T-cell (primary cell): ENCODE measurements at regions of chr20 and their contacts with region 1.

Region 1: GRCh38 chr20:57398231-57398821 is 7.1 kb downstream of the RBM38 start:
- DNase-seq: peak; percentile 88 to 98 (median 96)
- ATAC-seq: peak; percentile 79 to 83 (median 80)
- H3K4me3 ChIP-seq: peak overlapping the region; percentile 49 to 60
- H3K4me3 Mint-ChIP-seq: peak overlapping the region; percentile 83 to 94 (median 84)
- H3K27ac ChIP-seq: peak overlapping the region; percentile 98
- H3K27ac Mint-ChIP-seq: peak overlapping the region; percentile 97 to 100
- H3K4me1 ChIP-seq: peaks cover 70 to 100% of the 10 kb centered on the region in 2 experiments
- H3K4me1 Mint-ChIP-seq: peaks cover 82 to 96% (median 94%) of the 10 kb centered on the region in 3 donors
- H3K27me3 ChIP-seq: no peaks in the 10 kb centered on the region
- H3K27me3 Mint-ChIP-seq: no peaks in the 10 kb centered on the region

Region 2: DNA sequence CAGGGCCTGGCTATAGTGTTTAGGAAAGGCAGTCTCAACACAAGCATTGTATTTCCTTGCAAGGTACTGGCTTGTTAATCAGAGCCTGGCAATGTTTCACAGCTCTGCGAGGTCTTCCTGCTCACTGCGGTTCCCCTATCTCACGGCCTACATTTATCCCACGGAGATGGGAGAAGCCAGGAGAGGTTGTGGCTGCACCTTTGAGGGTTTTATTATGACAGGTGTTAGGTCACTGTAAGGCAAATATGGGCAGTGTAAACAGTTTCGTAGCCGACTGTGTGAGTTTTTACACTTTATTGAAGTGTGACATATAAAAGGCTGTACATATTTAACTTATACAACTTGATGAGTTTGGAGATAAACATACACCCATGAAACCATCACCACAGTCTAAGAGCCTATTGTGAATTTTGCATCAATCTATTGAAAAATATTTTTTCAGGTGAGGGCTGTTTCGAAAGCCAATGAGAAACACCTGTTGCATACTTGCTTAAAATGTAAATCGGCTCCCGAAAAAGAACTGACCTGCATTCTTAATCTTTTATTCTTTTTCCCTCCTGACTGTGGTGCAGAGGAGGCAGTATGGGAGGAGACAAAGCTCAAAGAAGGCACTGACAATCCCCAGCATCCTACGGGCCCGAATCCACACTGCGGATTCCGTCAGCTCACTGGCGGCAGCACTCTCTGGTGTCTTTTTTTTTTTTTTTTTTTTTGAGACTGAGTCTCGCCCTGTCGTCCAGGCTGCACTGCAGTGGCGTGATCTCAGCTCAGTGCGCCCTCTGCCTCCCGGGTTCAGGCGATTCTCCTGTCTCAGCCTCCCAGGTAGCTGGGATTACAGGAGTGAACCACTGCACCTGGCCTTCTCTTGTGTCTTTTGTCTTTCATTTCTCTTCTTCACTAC is 14.6 kb before region 1 on chr20:
- CTCF ChIA-PET with region 1: interaction called in 1 of 2 experiments, 13 read pairs
- POLR2A ChIA-PET with region 1: interaction called, 9 to 16 read pairs
- DNase-seq: no peak
- ATAC-seq: no peak
- H3K4me3 ChIP-seq: no peak overlapping the region
- H3K4me3 Mint-ChIP-seq: no peak overlapping the region
- H3K27ac ChIP-seq: no peak overlapping the region
- H3K27ac Mint-ChIP-seq: peak overlapping the region; percentile 4 to 44
- H3K4me1 ChIP-seq: peaks cover 0 to 29% of the 10 kb centered on the region in 2 experiments
- H3K4me1 Mint-ChIP-seq: peaks cover 13 to 25% (median 16%) of the 10 kb centered on the region in 3 donors
- H3K27me3 ChIP-seq: no peaks in the 10 kb centered on the region
- H3K27me3 Mint-ChIP-seq: no peaks in the 10 kb centered on the region

Region 3: DNA sequence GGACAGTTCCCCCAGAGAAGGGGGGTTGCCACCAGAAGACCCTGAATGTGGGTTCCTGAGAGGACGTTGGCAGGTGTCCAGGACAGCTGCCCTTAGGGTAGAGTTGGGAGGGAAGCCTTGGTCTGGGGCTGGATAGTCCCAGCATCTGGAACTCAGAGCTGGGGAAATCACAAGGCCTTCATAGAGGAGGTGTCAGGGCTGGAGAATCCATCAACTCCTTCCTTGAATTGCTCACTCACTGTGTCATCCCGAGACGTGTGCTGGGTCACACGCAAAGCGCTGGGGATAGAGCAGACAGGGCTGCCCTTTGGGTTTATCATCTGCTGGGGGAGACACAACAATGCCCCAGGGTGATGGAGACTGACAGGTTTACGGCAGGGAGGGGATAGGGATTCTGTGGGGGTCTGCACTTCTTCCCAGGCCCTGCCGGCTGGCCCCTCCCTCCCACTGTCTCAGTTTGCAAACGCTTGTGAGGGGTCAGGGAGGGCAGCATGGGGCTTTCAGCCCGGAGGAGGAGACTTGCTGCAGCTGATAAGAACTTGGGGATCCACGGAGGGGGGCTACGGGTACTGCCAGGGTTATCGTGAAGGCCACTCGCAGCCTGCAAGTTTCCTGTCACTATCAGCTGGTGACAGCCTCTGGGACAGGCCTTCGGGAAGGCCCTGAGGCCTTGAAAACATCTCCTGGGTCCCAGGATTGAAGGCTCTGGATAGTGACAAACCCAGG is 11.5 kb after region 1 on chr20:
- CTCF ChIA-PET with region 1: interaction called in 1 of 2 experiments, 3 read pairs
- POLR2A ChIA-PET with region 1: interaction called, 6 to 21 read pairs
- DNase-seq: no peak
- ATAC-seq: no peak
- H3K4me3 ChIP-seq: no peak overlapping the region
- H3K4me3 Mint-ChIP-seq: no peak overlapping the region
- H3K27ac ChIP-seq: no peak overlapping the region
- H3K27ac Mint-ChIP-seq: no peak overlapping the region
- H3K4me1 ChIP-seq: peaks cover 0 to 60% of the 10 kb centered on the region in 2 experiments
- H3K4me1 Mint-ChIP-seq: peaks cover 26 to 39% (median 31%) of the 10 kb centered on the region in 3 donors
- H3K27me3 ChIP-seq: no peaks in the 10 kb centered on the region
- H3K27me3 Mint-ChIP-seq: no peaks in the 10 kb centered on the region

Region 4: GRCh38 chr20:57507452-57507851 is 109.1 kb after region 1 on chr20:
- CTCF ChIA-PET with region 1: no interaction called
- POLR2A ChIA-PET with region 1: no interaction called
- DNase-seq: no peak
- ATAC-seq: no peak
- H3K4me3 ChIP-seq: no peak overlapping the region
- H3K4me3 Mint-ChIP-seq: no peak overlapping the region
- H3K27ac ChIP-seq: no peak overlapping the region
- H3K27ac Mint-ChIP-seq: no peak overlapping the region
- H3K4me1 ChIP-seq: no peaks in the 10 kb centered on the region
- H3K4me1 Mint-ChIP-seq: no peaks in the 10 kb centered on the region
- H3K27me3 ChIP-seq: peaks cover 4 to 21% of the 10 kb centered on the region in 2 experiments
- H3K27me3 Mint-ChIP-seq: peaks cover 34 to 38% of the 10 kb centered on the region in 2 donors